PC-3 (cell line): ENCODE measurements at regions of chr11 and their contacts with region 1.

Region 1: DNA sequence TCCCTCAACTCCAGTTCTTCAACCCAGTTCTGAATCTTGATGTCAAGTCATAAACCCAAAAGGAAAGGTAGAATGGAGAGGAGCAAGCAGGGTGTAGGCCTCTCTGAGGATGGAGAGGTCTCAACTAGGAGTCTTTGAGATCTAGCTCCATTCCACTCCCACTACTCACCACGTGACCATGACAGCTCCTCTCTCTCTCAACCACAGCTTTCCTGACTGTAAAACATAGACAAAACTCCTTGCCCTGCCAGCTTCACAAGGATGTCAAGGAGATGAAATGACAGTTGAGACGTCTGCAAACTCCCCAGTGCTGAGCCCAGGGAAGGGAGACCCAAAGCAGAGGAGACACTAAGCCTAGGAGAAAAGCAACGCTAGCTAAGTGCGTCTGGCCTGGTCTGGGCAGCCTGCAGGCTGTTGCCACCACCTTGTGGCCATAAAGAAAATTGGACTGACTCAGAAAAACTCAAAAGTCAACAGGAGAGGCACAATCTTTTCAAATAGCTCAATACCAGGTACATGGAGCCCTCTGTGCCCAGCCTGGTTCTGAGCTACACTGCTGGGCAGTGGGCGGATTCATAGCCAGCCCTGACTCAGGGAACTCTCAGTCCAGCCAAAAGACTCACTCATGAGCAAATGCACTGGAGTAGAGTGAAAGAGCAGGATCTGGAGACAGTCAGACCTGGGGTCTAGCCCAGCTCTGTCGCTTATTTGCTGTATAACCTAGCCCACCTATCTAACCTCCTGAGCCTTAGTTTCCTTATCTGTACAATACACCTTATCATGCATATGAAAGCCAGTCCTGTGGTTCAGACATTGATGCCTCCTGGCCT is 3.4 kb downstream of the CLPB start:
- DNase-seq: peak; percentile 68
- ATAC-seq: peak; percentile 26
- H3K4me3 ChIP-seq: no peak overlapping the region
- H3K27ac ChIP-seq: no peak overlapping the region
- H3K4me1 ChIP-seq: peaks cover 4% of the 10 kb centered on the region; the same call in 1 of the 2 replicates
- H3K27me3 ChIP-seq: no peaks in the 10 kb centered on the region
- CTCF ChIP-seq: peak; percentile 89

Region 2: DNA sequence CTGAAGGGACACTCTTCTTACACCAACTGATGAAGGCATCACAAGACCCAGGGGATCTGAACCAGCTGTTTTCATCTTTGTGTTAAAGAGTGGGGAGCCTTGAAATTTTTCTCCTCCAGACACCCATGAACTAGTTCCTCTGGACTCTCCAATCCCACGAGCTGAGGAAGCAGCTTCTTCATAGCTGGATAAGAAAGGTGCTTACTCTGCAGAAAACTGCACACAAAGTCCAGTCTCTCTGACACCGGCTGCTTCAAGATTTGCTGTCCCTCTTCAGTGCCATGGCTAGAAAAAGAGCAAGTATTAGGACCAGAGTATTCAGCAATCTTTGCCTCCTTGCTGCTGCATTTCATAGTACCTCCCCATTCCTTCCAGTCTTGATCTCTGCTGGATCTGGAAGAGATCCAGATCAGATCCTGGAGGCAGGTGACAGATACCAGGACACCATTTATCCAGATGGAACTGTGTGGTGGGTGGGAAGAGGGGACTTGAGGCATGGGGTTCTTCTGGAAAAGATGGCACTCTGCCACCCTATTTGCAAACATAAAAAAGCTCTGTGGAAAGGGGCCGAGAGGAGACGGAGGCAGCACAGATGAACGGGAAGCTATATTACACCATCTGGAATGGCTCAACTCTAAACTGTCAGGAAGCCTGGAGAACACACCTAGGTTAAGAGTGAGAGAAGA is 406.7 kb before region 1 on chr11:
- CTCF ChIA-PET with region 1: interaction called, 3 read pairs
- POLR2A ChIA-PET with region 1: no interaction called
- intact Hi-C with region 1: loop called (anchors 5 kb)
- DNase-seq: no peak
- ATAC-seq: no peak
- H3K4me3 ChIP-seq: no peak overlapping the region
- H3K27ac ChIP-seq: no peak overlapping the region
- H3K4me1 ChIP-seq: peaks cover 16% of the 10 kb centered on the region
- H3K27me3 ChIP-seq: no peaks in the 10 kb centered on the region
- CTCF ChIP-seq: no peak

Region 3: DNA sequence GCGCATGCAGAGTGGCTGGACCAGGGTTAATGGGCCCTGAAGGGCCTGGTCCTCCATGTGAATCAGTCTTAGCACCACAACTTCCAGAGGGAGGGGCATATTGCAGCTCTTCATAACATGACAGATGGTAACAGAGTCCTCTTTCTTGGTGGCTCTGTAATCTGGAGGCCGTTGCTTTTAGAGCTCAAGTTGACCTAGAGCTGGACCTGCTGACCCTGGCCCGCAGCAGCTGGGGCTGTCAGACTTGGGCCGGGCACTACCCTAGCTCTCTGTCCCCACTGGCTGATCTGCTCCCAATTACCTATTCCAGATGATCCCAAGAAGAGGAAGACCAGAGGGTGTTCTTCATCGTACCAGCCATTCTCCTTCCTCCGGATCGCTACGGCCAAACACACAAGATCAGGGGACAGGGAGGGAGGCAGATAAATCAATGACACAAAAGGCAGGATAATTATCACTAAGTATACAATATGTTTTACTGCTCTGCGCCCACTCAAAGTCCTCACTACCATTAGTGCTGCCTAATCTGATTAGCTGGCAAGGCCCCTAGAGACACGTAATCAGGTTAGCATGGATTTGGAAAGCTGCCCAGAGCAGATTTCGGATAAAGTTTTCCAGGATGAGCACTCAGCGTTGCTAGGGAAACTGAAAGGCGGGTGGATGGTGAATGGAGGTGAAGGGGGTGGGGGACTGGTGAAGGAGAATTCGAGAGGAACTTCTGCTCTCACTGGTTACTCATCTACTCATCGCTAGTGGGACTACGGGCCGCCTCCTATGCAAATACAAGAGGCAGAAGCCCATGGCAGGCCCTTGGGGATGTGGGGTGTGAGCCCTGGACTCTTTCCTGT is 122.5 kb before region 1 on chr11:
- CTCF ChIA-PET with region 1: no interaction called
- POLR2A ChIA-PET with region 1: no interaction called
- intact Hi-C with region 1: no loop called
- DNase-seq: peak; percentile 35
- ATAC-seq: no peak; the same call in 1 of the 2 replicates
- H3K4me3 ChIP-seq: no peak overlapping the region
- H3K27ac ChIP-seq: no peak overlapping the region
- H3K4me1 ChIP-seq: no peaks in the 10 kb centered on the region
- H3K27me3 ChIP-seq: no peaks in the 10 kb centered on the region
- CTCF ChIP-seq: no peak

Region 4: GRCh38 chr11:72328366-72329224 is 102.4 kb before region 1 on chr11:
- CTCF ChIA-PET with region 1: interaction called, 13 read pairs
- POLR2A ChIA-PET with region 1: no interaction called
- intact Hi-C with region 1: no loop called
- DNase-seq: peak; percentile 25
- ATAC-seq: no peak
- H3K4me3 ChIP-seq: no peak overlapping the region
- H3K27ac ChIP-seq: no peak overlapping the region
- H3K4me1 ChIP-seq: no peaks in the 10 kb centered on the region
- H3K27me3 ChIP-seq: no peaks in the 10 kb centered on the region
- CTCF ChIP-seq: peak; percentile 28; the same call in 1 of the 2 replicates

Region 5: GRCh38 chr11:72352859-72353551 is 78.0 kb before region 1 on chr11:
- CTCF ChIA-PET with region 1: interaction called, 15 read pairs
- POLR2A ChIA-PET with region 1: no interaction called
- intact Hi-C with region 1: loop called (anchors 5 kb)
- DNase-seq: no peak
- ATAC-seq: no peak
- H3K4me3 ChIP-seq: no peak overlapping the region
- H3K27ac ChIP-seq: no peak overlapping the region
- H3K4me1 ChIP-seq: no peaks in the 10 kb centered on the region
- H3K27me3 ChIP-seq: no peaks in the 10 kb centered on the region
- CTCF ChIP-seq: no peak

Region 6: GRCh38 chr11:72413914-72414628 is 16.9 kb before region 1 on chr11:
- CTCF ChIA-PET with region 1: interaction called, 19 read pairs
- POLR2A ChIA-PET with region 1: interaction called, 5 read pairs
- intact Hi-C with region 1: no loop called
- DNase-seq: peak; percentile 90
- ATAC-seq: peak; percentile 95
- H3K4me3 ChIP-seq: no peak overlapping the region
- H3K27ac ChIP-seq: no peak overlapping the region
- H3K4me1 ChIP-seq: peaks cover 5% of the 10 kb centered on the region; the same call in 1 of the 2 replicates
- H3K27me3 ChIP-seq: no peaks in the 10 kb centered on the region
- CTCF ChIP-seq: peak; percentile 96